GM12878 (cell line): ENCODE measurements at regions of chr20 and their contacts with region 1.

Region 1: DNA sequence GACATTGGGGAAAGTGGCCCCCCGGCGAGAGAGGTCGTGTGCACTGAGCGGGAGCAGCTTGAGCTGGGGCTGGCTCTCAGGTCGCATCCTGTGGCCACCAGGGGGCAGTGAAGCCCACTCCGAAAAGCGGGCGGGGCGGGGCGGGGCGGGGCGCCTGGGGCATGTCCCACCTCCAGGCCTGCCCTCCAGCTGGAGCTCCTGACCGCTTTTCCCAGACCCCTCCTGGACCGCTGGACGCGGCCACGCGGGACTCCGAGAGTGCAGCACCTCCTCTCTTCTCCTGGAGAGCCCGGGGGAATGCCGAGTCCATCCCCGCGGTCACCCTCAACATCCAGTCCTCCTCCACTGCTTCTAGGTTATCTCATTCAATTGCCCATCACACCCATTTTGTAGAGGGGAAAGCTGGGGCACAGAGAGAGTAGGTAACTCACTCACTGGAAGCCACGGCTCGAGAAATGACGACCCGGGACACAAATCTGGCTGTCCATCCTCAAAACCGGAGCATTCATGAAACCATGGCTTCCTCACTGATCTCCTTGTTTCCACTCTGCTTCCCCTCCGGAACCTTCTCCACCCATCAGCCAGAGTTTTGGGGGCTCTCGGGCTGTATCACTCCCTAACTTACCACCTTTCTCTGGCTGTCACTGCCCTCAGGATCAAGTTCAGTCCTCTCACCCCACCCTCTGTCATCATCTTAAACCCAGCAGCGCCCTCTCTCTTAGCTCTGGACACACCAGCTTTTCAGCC is 24.1 kb downstream of the COX4I2 start:
- DNase-seq: no peak
- ATAC-seq: peak; percentile 96
- H3K4me3 ChIP-seq: peak overlapping the region; percentile 65; the same call in 1 of the 2 replicates
- H3K27ac ChIP-seq: peak overlapping the region; percentile 42; the same call in 1 of the 2 replicates
- H3K4me1 ChIP-seq: peaks cover 3% of the 10 kb centered on the region; the same call in 1 of the 2 replicates
- H3K27me3 ChIP-seq: no peaks in the 10 kb centered on the region
- CTCF ChIP-seq: peak; percentile 61 to 82 (median 76)
- EP300 ChIP-seq: no peak
- POLR2A ChIP-seq: no peak
- RAD21 ChIP-seq: peak; percentile 77

Region 2: GRCh38 chr20:31630187-31630790 is 31.5 kb before region 1 on chr20:
- CTCF ChIA-PET with region 1: interaction called, 64 read pairs
- POLR2A ChIA-PET with region 1: interaction called, 4 read pairs
- RAD21 ChIA-PET with region 1: interaction called, 46 read pairs
- SMC1A ChIA-PET with region 1: interaction called, 33 read pairs
- in situ Hi-C with region 1: no loop called
- intact Hi-C with region 1: no loop called
- DNase-seq: no peak
- ATAC-seq: peak; percentile 64
- H3K4me3 ChIP-seq: no peak overlapping the region
- H3K27ac ChIP-seq: no peak overlapping the region
- H3K4me1 ChIP-seq: no peaks in the 10 kb centered on the region
- H3K27me3 ChIP-seq: no peaks in the 10 kb centered on the region
- CTCF ChIP-seq: no peak
- EP300 ChIP-seq: no peak
- POLR2A ChIP-seq: no peak
- RAD21 ChIP-seq: no peak

Region 3: DNA sequence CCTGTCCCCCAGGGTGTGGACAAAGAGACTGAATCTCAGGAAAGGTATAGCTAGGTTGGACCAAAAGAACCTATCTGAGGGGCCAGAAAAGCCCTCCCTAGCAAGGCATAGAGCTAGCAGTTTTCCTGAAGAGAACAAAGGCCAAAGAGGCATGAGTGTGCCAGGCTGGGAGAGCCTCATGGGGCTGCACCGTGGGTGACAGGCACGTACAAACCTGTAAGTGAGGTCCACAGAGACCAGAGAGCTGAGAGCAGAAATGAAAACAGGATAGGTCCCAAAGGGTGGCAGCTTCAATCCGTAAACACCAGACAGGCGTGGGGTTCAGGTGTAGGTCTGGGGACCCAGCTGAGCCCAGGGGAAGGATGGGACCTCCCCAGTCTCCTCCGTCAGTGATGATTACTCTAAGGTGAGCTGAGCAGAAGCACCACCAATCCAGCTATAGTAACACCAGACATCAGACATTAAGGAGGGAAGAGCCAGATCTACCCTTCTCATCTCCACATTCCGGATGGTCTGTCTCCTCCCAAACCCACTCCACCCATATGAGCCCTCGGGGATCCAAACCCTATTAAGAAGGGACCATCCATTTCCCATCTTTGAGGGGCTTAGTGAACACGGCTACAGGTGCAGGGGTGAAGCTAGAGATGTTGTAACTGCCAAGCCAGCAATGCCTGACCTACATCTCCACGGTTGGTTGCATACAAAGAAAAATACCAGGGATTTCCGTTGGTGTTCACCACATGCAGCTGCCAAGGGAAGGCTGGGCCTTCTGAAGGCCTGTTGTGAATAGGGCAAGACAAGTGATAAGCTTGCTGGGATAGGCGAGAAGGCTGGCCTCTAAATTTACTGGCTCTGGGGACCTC is 22.6 kb after region 1 on chr20:
- CTCF ChIA-PET with region 1: interaction called, 52 read pairs
- POLR2A ChIA-PET with region 1: interaction called, 10 read pairs
- RAD21 ChIA-PET with region 1: interaction called, 51 read pairs
- SMC1A ChIA-PET with region 1: interaction called, 43 read pairs
- in situ Hi-C with region 1: no loop called
- intact Hi-C with region 1: no loop called
- DNase-seq: no peak
- ATAC-seq: peak; percentile 82
- H3K4me3 ChIP-seq: peak overlapping the region; percentile 44; the same call in 1 of the 2 replicates
- H3K27ac ChIP-seq: peak overlapping the region; percentile 35
- H3K4me1 ChIP-seq: peaks cover 26% of the 10 kb centered on the region
- H3K27me3 ChIP-seq: no peaks in the 10 kb centered on the region
- CTCF ChIP-seq: no peak
- EP300 ChIP-seq: no peak
- POLR2A ChIP-seq: no peak
- RAD21 ChIP-seq: no peak

Region 4: DNA sequence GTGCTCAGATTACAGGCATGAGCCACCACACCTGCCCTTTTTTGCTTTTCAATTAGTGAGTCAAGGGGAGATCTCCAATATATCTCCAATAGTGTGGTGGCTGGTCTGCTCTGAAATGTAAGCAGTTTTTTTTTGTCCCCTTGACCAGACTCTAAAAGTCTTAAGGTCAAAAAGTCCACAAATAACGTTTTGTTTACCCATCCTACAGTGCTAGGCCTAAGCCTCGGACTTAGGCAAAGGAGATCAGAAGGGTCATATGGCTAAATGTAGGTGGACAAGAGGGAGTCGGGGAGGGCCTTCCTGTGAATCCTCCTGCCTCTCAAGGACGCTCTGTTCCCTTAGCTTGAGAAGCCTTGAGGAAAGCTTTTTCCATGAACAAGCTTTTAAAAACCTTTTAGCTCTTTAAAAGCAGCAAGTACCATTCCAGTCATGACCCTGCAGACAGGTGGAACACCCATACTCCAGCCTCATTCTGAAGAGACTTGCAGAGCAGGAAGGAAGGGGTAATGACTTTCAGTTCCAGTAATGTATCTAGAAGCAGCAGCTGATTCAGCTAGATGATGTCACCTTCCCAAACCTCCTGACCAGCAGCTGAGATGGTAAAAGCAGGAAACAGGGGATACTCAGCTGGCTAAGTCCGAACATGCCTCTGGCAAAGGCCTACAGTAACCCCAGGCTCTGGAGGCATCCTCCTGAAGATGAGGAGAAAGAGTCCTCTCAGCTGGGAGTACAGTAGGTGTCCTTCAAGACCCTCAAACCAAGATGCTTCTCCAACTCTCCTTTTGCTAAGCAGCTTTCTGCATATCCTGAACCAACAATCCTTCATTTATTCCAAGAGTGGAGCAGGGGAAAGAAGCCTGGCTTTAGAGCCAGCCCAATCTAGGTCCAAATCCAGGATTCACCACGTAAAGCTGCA is 37.3 kb after region 1 on chr20:
- CTCF ChIA-PET with region 1: interaction called, 27 read pairs
- POLR2A ChIA-PET with region 1: interaction called, 3 read pairs
- RAD21 ChIA-PET with region 1: interaction called, 25 read pairs
- SMC1A ChIA-PET with region 1: interaction called, 32 read pairs
- in situ Hi-C with region 1: no loop called
- intact Hi-C with region 1: no loop called
- DNase-seq: no peak
- ATAC-seq: peak; percentile 96
- H3K4me3 ChIP-seq: peak overlapping the region; percentile 30; the same call in 1 of the 2 replicates
- H3K27ac ChIP-seq: peak overlapping the region; percentile 60
- H3K4me1 ChIP-seq: peaks cover 21% of the 10 kb centered on the region
- H3K27me3 ChIP-seq: no peaks in the 10 kb centered on the region
- CTCF ChIP-seq: no peak
- EP300 ChIP-seq: no peak
- POLR2A ChIP-seq: no peak
- RAD21 ChIP-seq: no peak

Region 5: DNA sequence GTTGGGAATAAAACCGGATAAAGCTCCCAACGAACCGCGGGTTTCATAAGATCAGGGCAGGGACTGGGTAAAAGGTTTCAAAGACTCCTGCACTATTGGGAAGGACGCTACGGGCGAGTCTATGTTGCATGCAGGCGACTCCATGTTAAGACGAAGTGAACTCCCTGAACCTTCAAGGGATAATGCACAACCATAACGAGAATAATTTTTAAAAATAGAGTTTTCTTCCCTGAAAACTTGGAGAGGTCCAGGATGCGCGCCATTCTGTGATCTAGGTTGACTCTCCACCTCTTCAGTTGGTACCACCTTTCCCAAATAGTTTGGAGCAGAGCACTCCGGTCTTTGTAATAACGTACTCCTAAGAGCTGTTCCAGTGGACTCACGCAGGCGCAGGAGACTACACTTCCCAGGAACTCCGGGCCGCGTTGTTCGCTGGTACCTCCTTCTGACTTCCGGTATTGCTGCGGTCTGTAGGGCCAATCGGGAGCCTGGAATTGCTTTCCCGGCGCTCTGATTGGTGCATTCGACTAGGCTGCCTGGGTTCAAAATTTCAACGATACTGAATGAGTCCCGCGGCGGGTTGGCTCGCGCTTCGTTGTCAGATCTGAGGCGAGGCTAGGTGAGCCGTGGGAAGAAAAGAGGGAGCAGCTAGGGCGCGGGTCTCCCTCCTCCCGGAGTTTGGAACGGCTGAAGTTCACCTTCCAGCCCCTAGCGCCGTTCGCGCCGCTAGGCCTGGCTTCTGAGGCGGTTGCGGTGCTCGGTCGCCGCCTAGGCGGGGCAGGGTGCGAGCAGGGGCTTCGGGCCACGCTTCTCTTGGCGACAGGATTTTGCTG is 77.1 kb after region 1 on chr20 and contains the start of gene TPX2:
- CTCF ChIA-PET with region 1: interaction called, 27 read pairs
- POLR2A ChIA-PET with region 1: interaction called, 3 read pairs
- RAD21 ChIA-PET with region 1: interaction called, 17 read pairs
- SMC1A ChIA-PET with region 1: interaction called, 14 read pairs
- in situ Hi-C with region 1: no loop called
- intact Hi-C with region 1: no loop called
- DNase-seq: peak; percentile 88
- ATAC-seq: peak; percentile 98
- H3K4me3 ChIP-seq: peak within 1 kb of the TSS; percentile 89
- H3K27ac ChIP-seq: peak within 1 kb of the TSS; percentile 77
- H3K4me1 ChIP-seq: no peaks in the 10 kb centered on the region
- H3K27me3 ChIP-seq: no peaks in the 10 kb centered on the region
- CTCF ChIP-seq: peak in 1 of 3 experiments; percentile 30; a peak in 2 of 6 replicates
- EP300 ChIP-seq: no peak
- POLR2A ChIP-seq: peak; percentile 82
- RAD21 ChIP-seq: no peak
- polyA plus RNA-seq, gene TPX2: 29.7 to 40.7 TPM